Endothelial cell of umbilical vein (primary cell): ENCODE measurements at regions of chr5 and their contacts with region 1.

Region 1: GRCh38 chr5:18305297-18305924 is 671.2 kb downstream of the TAF11L14 start:
- DNase-seq: peak; percentile 49
- H3K4me3 ChIP-seq: no peak overlapping the region
- H3K27ac ChIP-seq: no peak overlapping the region
- H3K4me1 ChIP-seq: no peaks in the 10 kb centered on the region
- H3K27me3 ChIP-seq: no peaks in the 10 kb centered on the region
- CTCF ChIP-seq: peak; percentile 53 to 59
- POLR2A ChIP-seq: no peak

Region 2: GRCh38 chr5:17761326-17761725 is 544.1 kb before region 1 on chr5:
- CTCF ChIA-PET with region 1: no interaction called
- POLR2A ChIA-PET with region 1: no interaction called
- dilution Hi-C with region 1: no loop called
- intact Hi-C with region 1: no loop called
- DNase-seq: no peak
- H3K4me3 ChIP-seq: no peak overlapping the region
- H3K27ac ChIP-seq: no peak overlapping the region
- H3K4me1 ChIP-seq: no peaks in the 10 kb centered on the region
- H3K27me3 ChIP-seq: no peaks in the 10 kb centered on the region
- CTCF ChIP-seq: no peak
- POLR2A ChIP-seq: no peak

Region 3: GRCh38 chr5:18281682-18282557 is 23.5 kb before region 1 on chr5:
- CTCF ChIA-PET with region 1: interaction called, 12 read pairs
- POLR2A ChIA-PET with region 1: interaction called, 4 read pairs
- dilution Hi-C with region 1: no loop called
- intact Hi-C with region 1: loop called (anchors 2 kb)
- DNase-seq: peak; percentile 52
- H3K4me3 ChIP-seq: no peak overlapping the region
- H3K27ac ChIP-seq: no peak overlapping the region
- H3K4me1 ChIP-seq: no peaks in the 10 kb centered on the region
- H3K27me3 ChIP-seq: no peaks in the 10 kb centered on the region
- CTCF ChIP-seq: peak; percentile 21 to 24
- POLR2A ChIP-seq: no peak